ENCODE measurements at regions of chr11 and their contacts with region 1.

Region 1: DNA sequence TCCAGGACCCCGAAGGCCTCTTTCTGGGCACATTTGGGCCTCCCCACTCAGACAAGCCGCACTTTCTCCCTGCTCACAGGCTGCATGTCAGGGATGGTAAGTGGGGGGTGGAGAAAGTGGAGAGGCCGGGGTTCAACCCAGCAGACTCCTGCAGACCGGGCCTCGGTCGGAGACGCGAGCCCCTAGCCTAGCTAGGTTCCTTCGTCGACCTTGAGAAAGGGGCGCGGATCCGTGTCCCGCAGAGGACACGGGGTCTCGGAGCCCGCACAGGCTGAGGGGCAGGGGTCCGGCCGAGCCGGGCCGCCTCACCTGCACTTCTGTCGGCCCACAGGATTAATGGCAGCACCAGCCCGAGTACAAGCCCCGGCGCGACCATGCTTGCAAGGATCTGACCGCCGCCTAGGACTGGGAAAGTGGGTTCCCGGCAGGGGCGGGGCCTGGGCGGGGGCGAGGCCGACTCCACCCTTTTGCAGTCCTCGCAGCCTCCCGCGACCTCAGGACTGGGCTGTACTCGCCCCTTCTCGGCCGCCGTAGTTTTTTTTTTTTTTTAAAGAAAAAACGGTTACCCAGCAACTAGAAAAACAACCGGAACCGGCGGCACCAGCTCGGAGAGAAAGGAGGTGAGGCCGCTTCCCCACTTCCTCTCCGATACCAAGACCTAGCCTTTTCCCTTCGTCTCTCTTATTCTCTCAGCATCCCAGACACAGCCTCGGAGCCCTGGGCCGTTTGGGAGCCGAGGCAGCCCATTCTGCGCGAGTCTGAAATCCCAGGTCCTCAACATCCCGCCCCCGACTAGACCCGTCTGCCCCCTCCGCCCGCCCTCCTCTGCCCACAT is at the starts of genes SIAE and SPA17:
- DNase-seq: peak; percentile 82
- ATAC-seq: peak; percentile 91
- H3K4me3 Mint-ChIP-seq: peak within 1 kb of the TSS; percentile 92
- H3K27ac Mint-ChIP-seq: peak within 1 kb of the TSS; percentile 95
- H3K4me1 Mint-ChIP-seq: peaks cover 27% of the 10 kb centered on the region
- H3K27me3 Mint-ChIP-seq: no peaks in the 10 kb centered on the region
- CTCF ChIP-seq: no peak
- total RNA-seq, gene SIAE: 2.6 and 3.4 TPM in 2 replicates
- total RNA-seq, gene SPA17: 1.2 and 1.6 TPM in 2 replicates

Region 2: DNA sequence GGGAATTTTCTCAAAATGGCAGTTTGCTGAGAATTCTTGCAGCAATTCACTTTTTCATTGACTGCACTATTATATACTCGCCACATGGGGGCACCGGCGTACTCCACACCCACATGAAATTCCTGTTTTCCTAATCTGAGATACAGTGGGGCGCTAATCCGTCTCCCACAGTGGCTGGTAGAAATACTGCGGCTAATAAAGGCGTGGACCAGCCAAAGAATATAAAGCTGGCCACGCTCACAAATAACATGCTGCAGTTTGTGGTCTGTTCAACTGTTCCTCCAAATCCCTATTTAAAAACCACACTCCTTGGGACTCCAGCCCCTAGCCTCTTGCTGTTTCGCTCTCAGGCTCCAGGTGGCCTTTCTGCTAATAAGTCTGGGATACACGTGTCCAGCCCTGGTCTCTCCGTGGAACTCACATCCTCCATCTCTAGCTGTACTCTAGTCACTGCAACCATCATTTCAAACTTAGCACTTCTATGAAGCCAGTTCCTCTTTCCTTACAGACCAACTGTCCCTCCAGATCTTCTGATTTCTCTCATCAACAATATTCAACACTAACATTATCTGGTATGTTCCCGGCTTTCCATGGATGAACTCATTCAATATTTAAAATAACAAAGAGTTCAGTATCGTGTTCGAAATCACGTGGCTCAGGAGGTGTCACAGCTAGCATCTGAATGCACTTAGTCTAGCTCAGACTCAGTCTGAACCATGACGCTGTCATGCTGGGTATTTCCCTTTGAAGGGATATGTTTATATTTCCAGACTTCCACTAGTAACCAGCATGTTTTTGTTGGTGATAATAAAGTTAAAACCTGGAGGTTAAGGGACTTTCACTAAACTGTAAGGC is 28.9 kb before region 1 on chr11:
- CTCF ChIA-PET with region 1: interaction called, 14 read pairs
- POLR2A ChIA-PET with region 1: no interaction called
- intact Hi-C with region 1: loop called (anchors 1 kb)
- DNase-seq: no peak
- ATAC-seq: peak; percentile 79
- H3K4me3 Mint-ChIP-seq: no peak overlapping the region
- H3K27ac Mint-ChIP-seq: no peak overlapping the region
- H3K4me1 Mint-ChIP-seq: peaks cover 18% of the 10 kb centered on the region
- H3K27me3 Mint-ChIP-seq: no peaks in the 10 kb centered on the region
- CTCF ChIP-seq: peak; percentile 87

Region 3: DNA sequence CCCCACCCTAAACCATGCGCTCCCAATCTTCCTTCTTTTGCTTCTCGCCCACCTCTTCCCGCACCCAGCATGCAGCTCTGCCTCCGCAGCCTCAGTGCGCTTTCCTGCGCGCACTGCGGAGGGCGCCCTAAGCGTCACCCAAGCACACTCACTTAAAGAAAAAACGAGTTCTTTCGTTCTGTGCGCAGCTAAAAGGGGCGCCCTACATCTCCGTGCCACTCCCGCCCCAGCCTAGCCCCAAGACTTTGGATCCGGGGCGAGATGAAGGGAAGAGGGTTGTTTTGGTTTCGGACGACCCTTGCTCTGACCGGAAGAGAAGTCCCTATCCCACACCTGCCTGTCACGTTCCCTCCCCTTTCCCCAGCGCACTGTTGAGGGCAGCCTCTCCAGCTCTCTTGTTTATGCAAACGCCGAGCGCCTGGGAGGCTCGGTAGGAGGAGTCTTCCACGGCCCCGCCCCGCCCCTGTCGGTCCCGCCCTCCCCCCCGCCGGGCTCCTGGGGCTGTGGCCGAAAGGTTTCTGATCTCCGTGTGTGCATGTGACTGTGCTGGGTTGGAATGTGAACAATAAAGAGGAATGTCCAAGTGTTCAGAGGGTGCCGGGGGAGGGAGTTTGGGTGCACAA is 73.2 kb after region 1 on chr11:
- CTCF ChIA-PET with region 1: interaction called, 16 read pairs
- POLR2A ChIA-PET with region 1: interaction called, 24 read pairs
- intact Hi-C with region 1: loop called (anchors 1 kb)
- DNase-seq: peak; percentile 73
- ATAC-seq: peak; percentile 89
- H3K4me3 Mint-ChIP-seq: peak overlapping the region; percentile 97
- H3K27ac Mint-ChIP-seq: peak overlapping the region; percentile 93
- H3K4me1 Mint-ChIP-seq: peaks cover 37% of the 10 kb centered on the region
- H3K27me3 Mint-ChIP-seq: peaks cover 2% of the 10 kb centered on the region
- CTCF ChIP-seq: no peak

Region 4: DNA sequence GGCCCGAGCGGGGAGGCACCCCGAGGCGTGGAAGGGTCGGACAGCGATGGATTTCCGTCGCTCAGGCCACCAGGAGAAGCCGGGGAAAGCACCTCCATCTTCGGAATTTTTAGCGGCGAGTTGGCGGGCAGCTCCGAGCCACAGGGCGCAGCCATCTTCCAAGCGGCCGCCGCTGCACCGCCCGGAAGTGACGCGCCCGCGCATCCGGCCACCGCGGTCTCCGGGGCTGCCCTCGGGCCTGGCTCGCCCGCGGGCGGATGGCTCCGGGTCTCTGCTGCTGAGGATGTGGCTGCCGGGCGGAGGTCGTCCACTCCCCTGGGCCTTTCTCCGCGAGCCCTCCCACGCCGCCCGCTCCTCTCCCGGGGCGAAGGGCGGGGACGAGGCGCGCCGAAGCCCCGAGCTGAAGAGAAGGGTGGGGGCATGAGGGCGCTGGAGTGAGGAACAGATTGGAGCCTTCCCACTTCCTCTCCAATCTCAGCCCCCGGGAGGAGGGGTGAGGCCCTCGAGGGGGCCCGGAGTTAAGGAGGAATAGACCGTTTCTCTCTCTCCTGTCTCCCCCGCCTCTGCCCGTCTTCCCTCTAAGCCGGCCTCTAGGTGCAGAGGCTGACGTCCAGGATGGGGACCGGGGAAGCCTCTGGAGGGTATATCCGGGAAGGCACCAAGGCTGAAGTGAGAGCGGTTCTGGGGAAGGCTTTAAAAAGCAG is 126.8 kb after region 1 on chr11 and contains the start of gene MSANTD2:
- CTCF ChIA-PET with region 1: interaction called, 33 read pairs
- POLR2A ChIA-PET with region 1: interaction called, 9 read pairs
- intact Hi-C with region 1: loop called (anchors 1 kb)
- DNase-seq: peak; percentile 85
- ATAC-seq: peak; percentile 84
- H3K4me3 Mint-ChIP-seq: peak within 1 kb of the TSS; percentile 92
- H3K27ac Mint-ChIP-seq: peak within 1 kb of the TSS; percentile 92
- H3K4me1 Mint-ChIP-seq: peaks cover 26% of the 10 kb centered on the region
- H3K27me3 Mint-ChIP-seq: no peaks in the 10 kb centered on the region
- CTCF ChIP-seq: no peak
- total RNA-seq, gene MSANTD2: 17.7 and 21.0 TPM in 2 replicates

Region 5: GRCh38 chr11:124875943-124876817 is 202.6 kb after region 1 on chr11:
- CTCF ChIA-PET with region 1: interaction called, 11 read pairs
- POLR2A ChIA-PET with region 1: no interaction called
- intact Hi-C with region 1: no loop called
- DNase-seq: peak; percentile 67
- ATAC-seq: peak; percentile 96
- H3K4me3 Mint-ChIP-seq: peak overlapping the region; percentile 85
- H3K27ac Mint-ChIP-seq: no peak overlapping the region
- H3K4me1 Mint-ChIP-seq: peaks cover 18% of the 10 kb centered on the region
- H3K27me3 Mint-ChIP-seq: peaks cover 69% of the 10 kb centered on the region
- CTCF ChIP-seq: peak; percentile 45

Region 6: GRCh38 chr11:125111343-125112207 is 438.0 kb after region 1 on chr11 and contains the start of gene TMEM218:
- CTCF ChIA-PET with region 1: no interaction called
- POLR2A ChIA-PET with region 1: no interaction called
- intact Hi-C with region 1: loop called (anchors 5 kb)
- DNase-seq: peak; percentile 82
- ATAC-seq: peak; percentile 96
- H3K4me3 Mint-ChIP-seq: peak within 1 kb of the TSS; percentile 98
- H3K27ac Mint-ChIP-seq: peak within 1 kb of the TSS; percentile 97
- H3K4me1 Mint-ChIP-seq: peaks cover 23% of the 10 kb centered on the region
- H3K27me3 Mint-ChIP-seq: peaks cover 4% of the 10 kb centered on the region
- CTCF ChIP-seq: no peak
- total RNA-seq, gene TMEM218: 18.8 and 20.1 TPM in 2 replicates

Region 7: GRCh38 chr11:125441648-125442410 is 768.3 kb after region 1 on chr11:
- CTCF ChIA-PET with region 1: no interaction called
- POLR2A ChIA-PET with region 1: no interaction called
- intact Hi-C with region 1: no loop called
- DNase-seq: no peak
- ATAC-seq: no peak
- H3K4me3 Mint-ChIP-seq: no peak overlapping the region
- H3K27ac Mint-ChIP-seq: no peak overlapping the region
- H3K4me1 Mint-ChIP-seq: no peaks in the 10 kb centered on the region
- H3K27me3 Mint-ChIP-seq: peaks cover 42% of the 10 kb centered on the region
- CTCF ChIP-seq: no peak

Region 8: GRCh38 chr11:125887373-125888324 is 1214.1 kb after region 1 on chr11 and contains the start of gene HYLS1:
- CTCF ChIA-PET with region 1: no interaction called
- POLR2A ChIA-PET with region 1: interaction called, 3 read pairs
- intact Hi-C with region 1: loop called (anchors 2 kb)
- DNase-seq: peak; percentile 97
- ATAC-seq: peak; percentile 84
- H3K4me3 Mint-ChIP-seq: peak within 1 kb of the TSS; percentile 90
- H3K27ac Mint-ChIP-seq: peak within 1 kb of the TSS; percentile 98
- H3K4me1 Mint-ChIP-seq: peaks cover 18% of the 10 kb centered on the region
- H3K27me3 Mint-ChIP-seq: peaks cover 3% of the 10 kb centered on the region
- CTCF ChIP-seq: no peak
- total RNA-seq, gene HYLS1: 9.0 TPM in 2 replicates